Heart left ventricle (tissue), 16 donors: ENCODE measurements at regions of chr7 and their contacts with region 1.

Region 1: GRCh38 chr7:95476904-95477594 is 8.7 kb upstream of the ASB4 start:
- DNase-seq: peak in 4 of 5 donors; percentile 36 to 59 (median 50)
- ATAC-seq: peak in 3 of 4 donors; percentile 58 to 77 (median 62)
- H3K4me3 ChIP-seq: no peak overlapping the region
- H3K27ac ChIP-seq: no peak overlapping the region
- H3K4me1 ChIP-seq: peaks cover 0 to 9% (median 0%) of the 10 kb centered on the region in 12 donors
- H3K27me3 ChIP-seq: no peaks in the 10 kb centered on the region
- CTCF ChIP-seq: peak; percentile 63 to 84 (median 78)
- POLR2A ChIP-seq: no peak

Region 2: GRCh38 chr7:94295850-94296249 is 1181.2 kb before region 1 on chr7:
- intact Hi-C with region 1: loop called in 3 of 10 experiments (anchors 5 to 10 kb)
- DNase-seq: no peak
- ATAC-seq: peak; percentile 64 to 75 (median 70)
- H3K4me3 ChIP-seq: peak overlapping the region in 7 of 12 donors; percentile 5 to 50 (median 21)
- H3K27ac ChIP-seq: peak overlapping the region; percentile 25 to 81 (median 61)
- H3K4me1 ChIP-seq: peaks cover 0 to 34% (median 6%) of the 10 kb centered on the region in 12 donors
- H3K27me3 ChIP-seq: no peaks in the 10 kb centered on the region
- CTCF ChIP-seq: peak; percentile 24 to 67 (median 48)
- POLR2A ChIP-seq: no peak

Region 3: GRCh38 chr7:95199779-95200558 is 277.1 kb before region 1 on chr7:
- intact Hi-C with region 1: loop called in 2 of 10 experiments (anchors 10 kb)
- DNase-seq: peak in 2 of 5 donors; percentile 22 to 28
- ATAC-seq: peak; percentile 75 to 87 (median 82)
- H3K4me3 ChIP-seq: no peak overlapping the region
- H3K27ac ChIP-seq: no peak overlapping the region
- H3K4me1 ChIP-seq: peaks cover 0 to 7% (median 0%) of the 10 kb centered on the region in 12 donors
- H3K27me3 ChIP-seq: no peaks in the 10 kb centered on the region
- CTCF ChIP-seq: peak; percentile 42 to 74 (median 63)
- POLR2A ChIP-seq: no peak

Region 4: DNA sequence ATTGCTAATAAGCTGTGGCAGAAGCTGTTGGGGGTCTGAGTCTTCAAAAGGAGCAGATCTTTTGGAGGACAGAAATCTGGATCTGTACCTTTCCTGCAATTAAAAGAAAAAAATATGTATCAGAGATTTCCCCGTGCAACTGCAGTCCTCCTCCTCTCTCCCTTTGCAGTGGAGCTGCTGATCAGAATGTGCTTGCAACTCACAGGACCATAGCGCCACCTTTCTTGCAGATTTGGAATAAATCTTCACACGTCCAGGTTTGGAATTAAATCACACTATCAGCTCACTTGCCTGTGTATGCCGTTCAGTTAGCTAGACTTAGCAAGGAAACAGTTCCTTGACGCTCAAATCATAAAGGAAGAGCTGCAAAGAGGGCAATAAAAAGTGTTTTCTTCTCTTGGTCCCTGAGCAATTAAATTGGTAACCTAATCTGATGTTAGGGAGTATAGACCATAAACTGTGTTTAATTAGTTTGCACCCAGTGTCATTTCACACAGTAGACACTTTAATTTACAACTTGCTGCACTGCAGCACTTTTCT is 230.1 kb before region 1 on chr7:
- intact Hi-C with region 1: loop called in 1 of 10 experiments (anchors 10 kb)
- DNase-seq: peak in 4 of 5 donors; percentile 25 to 32 (median 29)
- ATAC-seq: peak; percentile 55 to 85 (median 73)
- H3K4me3 ChIP-seq: peak overlapping the region in 4 of 12 donors; percentile 9 to 22 (median 22)
- H3K27ac ChIP-seq: no peak overlapping the region
- H3K4me1 ChIP-seq: peaks cover 0 to 6% (median 0%) of the 10 kb centered on the region in 12 donors
- H3K27me3 ChIP-seq: no peaks in the 10 kb centered on the region
- CTCF ChIP-seq: peak; percentile 36 to 76 (median 62)
- POLR2A ChIP-seq: no peak

Region 5: GRCh38 chr7:95263785-95264575 is 213.1 kb before region 1 on chr7:
- intact Hi-C with region 1: loop called in 1 of 10 experiments (anchors 10 kb)
- DNase-seq: no peak
- ATAC-seq: peak in 2 of 4 donors; percentile 13 to 76
- H3K4me3 ChIP-seq: no peak overlapping the region
- H3K27ac ChIP-seq: no peak overlapping the region
- H3K4me1 ChIP-seq: no peaks in the 10 kb centered on the region
- H3K27me3 ChIP-seq: no peaks in the 10 kb centered on the region
- CTCF ChIP-seq: no peak
- POLR2A ChIP-seq: no peak

Region 6: DNA sequence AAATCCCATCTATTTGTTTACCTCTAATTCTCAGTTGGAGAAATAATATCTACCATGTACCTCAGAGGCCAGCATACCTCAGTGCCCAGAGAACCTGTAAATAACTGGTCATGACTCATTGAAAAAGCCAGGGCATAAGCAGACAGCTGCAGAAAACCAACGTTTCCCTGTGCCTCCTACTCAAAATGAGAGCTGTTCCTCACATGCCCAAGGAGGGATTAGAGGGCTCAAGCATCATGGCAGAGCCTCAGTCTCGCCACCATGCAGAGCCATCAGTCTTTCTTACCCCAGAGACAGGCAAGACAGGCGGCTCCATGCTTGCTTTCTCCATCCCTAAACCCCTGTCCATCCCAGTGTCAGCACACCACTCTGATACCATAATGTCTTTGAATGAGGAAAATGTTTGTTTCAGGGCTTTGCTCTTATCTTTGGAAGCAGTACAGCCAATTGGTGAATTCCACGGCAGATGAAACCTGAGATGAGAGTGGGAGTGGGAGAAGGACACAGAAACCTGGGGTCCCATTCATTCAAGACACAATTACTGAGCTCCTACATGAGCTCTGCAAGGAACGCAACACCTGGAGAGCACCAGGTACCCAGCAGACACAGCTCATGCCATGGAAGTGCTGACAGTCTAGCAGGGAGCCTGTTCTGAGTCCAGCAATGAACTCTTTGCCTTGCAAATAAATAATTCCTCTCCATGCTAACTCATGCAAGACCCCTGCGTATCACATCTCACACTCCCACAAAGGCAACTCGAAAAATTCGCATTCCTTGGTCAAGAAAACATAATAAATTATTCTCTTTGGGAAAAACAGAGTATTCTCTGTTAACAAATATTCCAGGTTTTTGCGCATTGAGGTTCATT is 173.8 kb before region 1 on chr7:
- intact Hi-C with region 1: no loop called
- DNase-seq: no peak
- ATAC-seq: no peak
- H3K4me3 ChIP-seq: no peak overlapping the region
- H3K27ac ChIP-seq: no peak overlapping the region
- H3K4me1 ChIP-seq: no peaks in the 10 kb centered on the region
- H3K27me3 ChIP-seq: no peaks in the 10 kb centered on the region
- CTCF ChIP-seq: no peak
- POLR2A ChIP-seq: no peak

Region 7: GRCh38 chr7:95357623-95358022 is 119.4 kb before region 1 on chr7:
- intact Hi-C with region 1: loop called in 1 of 10 experiments (anchors 10 kb)
- DNase-seq: no peak
- ATAC-seq: no peak
- H3K4me3 ChIP-seq: no peak overlapping the region
- H3K27ac ChIP-seq: no peak overlapping the region
- H3K4me1 ChIP-seq: no peaks in the 10 kb centered on the region
- H3K27me3 ChIP-seq: no peaks in the 10 kb centered on the region
- CTCF ChIP-seq: peak in 1 of 12 donors; percentile 14
- POLR2A ChIP-seq: no peak

Region 8: GRCh38 chr7:95396136-95397032 is 80.7 kb before region 1 on chr7 and contains the start of gene PON3:
- intact Hi-C with region 1: loop called in 2 of 10 experiments (anchors 2 to 5 kb)
- DNase-seq: peak in 4 of 5 donors; percentile 18 to 41 (median 24)
- ATAC-seq: peak in 3 of 4 donors; percentile 36 to 73 (median 46)
- H3K4me3 ChIP-seq: peak within 1 kb of the TSS; percentile 27 to 69 (median 58)
- H3K27ac ChIP-seq: peak within 1 kb of the TSS in 1 of 12 donors; percentile 19
- H3K4me1 ChIP-seq: peaks cover 0 to 14% (median 0%) of the 10 kb centered on the region in 12 donors
- H3K27me3 ChIP-seq: peaks cover 0 to 24% (median 6%) of the 10 kb centered on the region in 9 donors
- CTCF ChIP-seq: peak in 6 of 12 donors; percentile 9 to 43 (median 19)
- POLR2A ChIP-seq: no peak
- total RNA-seq, gene PON3: 0.28 to 1.8 (median 0.70) TPM